Astrocyte of the cerebellum (primary cell): ENCODE measurements at regions of chr21 and their contacts with region 1.

Region 1: DNA sequence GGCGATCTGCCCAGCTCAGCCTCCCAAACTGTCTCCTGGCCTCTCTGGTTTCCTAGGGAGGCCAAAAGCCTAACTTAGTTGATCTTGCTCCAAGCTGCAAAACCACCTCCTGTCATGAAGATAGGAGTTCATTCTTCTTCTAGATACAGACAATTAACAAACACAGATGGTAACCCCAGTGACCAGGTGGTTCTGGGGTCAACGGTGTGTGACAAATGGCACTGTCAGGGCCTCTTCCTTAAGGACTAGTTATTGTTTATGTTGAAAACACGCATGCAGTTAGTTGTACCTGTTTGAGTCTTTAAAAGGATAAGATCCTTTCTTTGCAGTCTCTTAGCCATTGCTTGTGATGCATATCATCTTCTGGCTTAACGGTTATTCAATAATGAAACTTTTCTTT is 4.6 kb upstream of the UMODL1 start:
- DNase-seq: no peak
- H3K4me3 ChIP-seq: no peak overlapping the region
- CTCF ChIP-seq: no peak

Region 2: GRCh38 chr21:42019101-42019605 is 47.4 kb before region 1 on chr21:
- in situ Hi-C with region 1: loop called (anchors 5 kb)
- DNase-seq: no peak
- H3K4me3 ChIP-seq: no peak overlapping the region
- CTCF ChIP-seq: no peak

Region 3: GRCh38 chr21:42097860-42098454 is 31.4 kb after region 1 on chr21:
- in situ Hi-C with region 1: loop called (anchors 5 kb)
- DNase-seq: peak; percentile 85
- H3K4me3 ChIP-seq: no peak overlapping the region
- CTCF ChIP-seq: no peak